ENCODE measurements at regions of chr11 and their contacts with region 1.

Region 1: GRCh38 chr11:95392646-95393045 is 161.6 kb upstream of the SESN3 start:
- DNase-seq: no peak
- ATAC-seq: no peak
- H3K4me3 ChIP-seq: no peak overlapping the region
- H3K27ac ChIP-seq: no peak overlapping the region
- H3K4me1 ChIP-seq: no peaks in the 10 kb centered on the region
- H3K27me3 ChIP-seq: no peaks in the 10 kb centered on the region
- CTCF ChIP-seq: no peak

Region 2: GRCh38 chr11:95453616-95454171 is 61.0 kb after region 1 on chr11:
- intact Hi-C with region 1: loop called in 1 of 10 experiments (anchors 2 kb)
- DNase-seq: peak; percentile 63 to 68
- ATAC-seq: peak in 7 of 8 donors; percentile 39 to 89 (median 71)
- H3K4me3 ChIP-seq: no peak overlapping the region
- H3K27ac ChIP-seq: peak overlapping the region in 6 of 10 donors; percentile 22 to 62 (median 43)
- H3K4me1 ChIP-seq: peaks cover 0 to 41% (median 19%) of the 10 kb centered on the region in 9 donors
- H3K27me3 ChIP-seq: no peaks in the 10 kb centered on the region
- CTCF ChIP-seq: no peak